ENCODE measurements at regions of chr6 and their contacts with region 1.

Region 1: DNA sequence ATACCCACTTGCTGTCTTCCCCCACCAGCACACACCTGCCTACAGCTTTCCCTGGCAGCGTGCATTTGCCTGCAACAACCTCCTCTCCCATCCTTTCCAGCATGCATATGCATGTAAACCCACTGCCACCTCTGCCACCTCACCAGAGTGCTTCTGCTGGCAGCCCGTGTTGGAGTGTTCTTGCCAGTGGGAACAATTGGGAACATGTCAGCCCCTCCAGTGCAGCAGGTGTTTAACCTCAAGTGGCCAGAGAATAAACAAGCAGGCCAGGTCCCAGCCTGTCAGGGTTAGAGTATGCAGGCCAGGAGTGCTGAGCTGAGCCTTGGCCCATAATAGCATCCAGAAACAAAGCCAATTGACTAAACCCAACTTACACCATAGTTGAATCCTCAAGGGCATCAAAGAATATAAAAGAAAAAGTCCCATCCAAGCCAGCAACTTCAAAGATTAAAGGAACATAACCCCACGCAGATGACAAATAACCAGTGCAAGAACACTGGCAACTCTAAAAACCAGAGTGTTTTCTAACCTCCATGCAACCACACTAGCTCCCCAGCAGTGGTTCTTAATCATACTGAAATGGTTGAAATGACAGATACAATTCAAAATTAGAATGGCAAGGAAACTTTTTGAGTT is 1212.1 kb upstream of the CITED2 start:
- DNase-seq: peak; percentile 16
- H3K4me3 Mint-ChIP-seq: peak overlapping the region; percentile 43
- H3K27ac Mint-ChIP-seq: peak overlapping the region; percentile 91
- H3K4me1 Mint-ChIP-seq: peaks cover 58% of the 10 kb centered on the region
- H3K27me3 Mint-ChIP-seq: no peaks in the 10 kb centered on the region

Region 2: DNA sequence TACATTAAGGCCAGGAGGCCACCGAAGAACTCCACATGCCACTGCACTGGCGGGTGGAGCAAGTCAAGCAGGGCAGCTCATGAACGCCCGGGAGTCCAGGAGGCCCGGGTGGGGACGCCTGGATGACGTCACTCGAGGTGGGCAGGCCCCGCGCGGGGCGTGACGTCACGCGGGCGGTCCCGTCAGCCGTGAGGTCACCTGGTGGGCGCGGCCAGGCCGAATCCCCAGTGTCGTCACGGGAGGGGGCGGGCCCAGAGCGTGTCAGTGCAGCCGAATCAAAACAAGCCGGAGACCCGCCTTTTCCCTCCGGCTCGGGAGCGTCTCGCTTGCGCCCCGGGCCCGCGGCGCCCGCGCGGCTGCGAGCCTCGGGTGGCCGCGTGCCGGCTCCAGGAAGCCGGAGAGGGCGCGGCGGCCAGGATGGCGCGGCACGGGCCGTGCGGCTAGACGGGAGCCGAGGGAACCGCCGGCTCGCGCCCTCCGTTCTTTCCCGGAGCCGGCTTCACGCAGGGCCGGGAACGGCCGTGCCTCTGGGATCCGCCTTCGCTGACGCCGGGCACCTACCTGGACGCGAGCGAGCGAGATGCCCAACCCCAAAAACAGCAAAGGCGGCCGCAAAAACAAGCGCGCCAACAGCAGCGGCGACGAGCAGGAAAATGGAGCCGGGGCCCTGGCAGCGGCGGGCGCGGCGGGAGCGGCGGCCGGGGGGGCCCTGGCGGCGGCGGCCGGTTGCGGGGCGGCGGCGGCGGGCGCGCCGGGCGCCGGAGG is 1451.5 kb before region 1 on chr6 and contains the start of gene HECA:
- intact Hi-C with region 1: loop called (anchors 10 kb)
- DNase-seq: peak; percentile 96
- H3K4me3 Mint-ChIP-seq: peak within 1 kb of the TSS; percentile 81
- H3K27ac Mint-ChIP-seq: peak within 1 kb of the TSS; percentile 85
- H3K4me1 Mint-ChIP-seq: peaks cover 60% of the 10 kb centered on the region
- H3K27me3 Mint-ChIP-seq: no peaks in the 10 kb centered on the region
- total RNA-seq, gene HECA: 33.6 and 36.9 TPM in 2 replicates

Region 3: GRCh38 chr6:140486114-140486767 is 100.3 kb before region 1 on chr6:
- intact Hi-C with region 1: loop called (anchors 1 kb)
- DNase-seq: no peak
- H3K4me3 Mint-ChIP-seq: no peak overlapping the region
- H3K27ac Mint-ChIP-seq: no peak overlapping the region
- H3K4me1 Mint-ChIP-seq: peaks cover 19% of the 10 kb centered on the region
- H3K27me3 Mint-ChIP-seq: no peaks in the 10 kb centered on the region

Region 4: DNA sequence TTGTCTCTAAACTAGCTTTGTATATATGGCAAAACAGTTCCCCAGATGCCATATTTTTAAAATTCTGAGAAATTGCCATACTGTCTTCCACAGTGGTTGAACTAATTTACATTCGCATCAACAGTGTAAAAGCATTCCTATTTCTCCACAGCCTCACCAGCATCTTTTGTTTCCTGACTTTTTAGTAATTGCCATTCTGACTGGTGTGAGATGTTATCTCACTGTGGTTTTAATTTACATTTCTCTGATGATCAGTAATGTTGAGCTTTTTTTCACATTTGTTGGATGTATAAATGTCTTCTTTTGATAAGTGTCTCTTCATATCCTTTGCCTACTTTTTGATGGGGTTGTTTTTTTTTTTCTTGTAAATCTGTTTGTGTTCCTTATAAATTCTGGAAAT is 10.6 kb after region 1 on chr6:
- intact Hi-C with region 1: loop called (anchors 1 kb)
- DNase-seq: no peak
- H3K4me3 Mint-ChIP-seq: no peak overlapping the region
- H3K27ac Mint-ChIP-seq: peak overlapping the region; percentile 0
- H3K4me1 Mint-ChIP-seq: peaks cover 21% of the 10 kb centered on the region
- H3K27me3 Mint-ChIP-seq: no peaks in the 10 kb centered on the region

Region 5: DNA sequence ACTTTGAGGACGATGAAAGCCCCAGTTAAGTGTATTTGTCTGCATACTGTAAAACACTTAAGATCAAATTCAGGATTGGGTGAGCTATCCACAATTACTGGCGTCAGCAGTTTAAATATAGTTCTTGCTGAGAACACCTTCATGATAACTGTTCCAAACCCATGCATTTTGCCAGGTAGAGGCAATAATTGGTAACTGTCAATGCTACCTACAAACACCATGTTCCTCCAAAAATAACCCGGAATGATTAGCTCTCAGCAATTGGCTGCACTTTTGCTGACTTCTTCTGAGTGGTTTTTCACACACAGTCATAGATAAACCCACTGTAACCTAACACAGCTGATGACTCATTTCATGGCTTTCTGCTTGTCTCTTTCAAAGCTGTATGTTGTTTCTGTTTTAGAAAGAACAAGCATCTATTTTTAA is 187.5 kb after region 1 on chr6:
- intact Hi-C with region 1: loop called (anchors 10 kb)
- DNase-seq: no peak
- H3K4me3 Mint-ChIP-seq: no peak overlapping the region
- H3K27ac Mint-ChIP-seq: no peak overlapping the region
- H3K4me1 Mint-ChIP-seq: peaks cover 8% of the 10 kb centered on the region
- H3K27me3 Mint-ChIP-seq: peaks cover 10% of the 10 kb centered on the region

Region 6: GRCh38 chr6:141483598-141484061 is 897.1 kb after region 1 on chr6:
- intact Hi-C with region 1: loop called (anchors 5 kb)
- DNase-seq: peak; percentile 62
- H3K4me3 Mint-ChIP-seq: peak overlapping the region; percentile 81
- H3K27ac Mint-ChIP-seq: peak overlapping the region; percentile 97
- H3K4me1 Mint-ChIP-seq: peaks cover 48% of the 10 kb centered on the region
- H3K27me3 Mint-ChIP-seq: no peaks in the 10 kb centered on the region

Measured in activated T-helper 2 cell treated with anti-CD3 and anti-CD28 coated beads, Interferon-gamma antibody, Interleukin-2, Interleukin-4, amounts not matched to agents 10 μg/mL and 5 μg/mL and 100 μg/mL, durations not matched to agents 14 hours and 24 hours and 36 hours (primary cell).